ENCODE measurements at regions of chr10 and their contacts with region 1.

Region 1: GRCh38 chr10:22316285-22317120 is at the start of gene COMMD3:
- DNase-seq: peak; percentile 87 to 93 (median 91)
- H3K4me3 ChIP-seq: peak within 1 kb of the TSS; percentile 53
- H3K27ac ChIP-seq: peak within 1 kb of the TSS; percentile 87 to 89
- H3K4me1 ChIP-seq: no peaks in the 10 kb centered on the region
- H3K27me3 ChIP-seq: no peaks in the 10 kb centered on the region
- CTCF ChIP-seq: no peak
- EP300 ChIP-seq: no peak
- POLR2A ChIP-seq: peak; percentile 54
- total RNA-seq, gene COMMD3: 18.8 to 42.3 (median 31.4) TPM

Region 2: DNA sequence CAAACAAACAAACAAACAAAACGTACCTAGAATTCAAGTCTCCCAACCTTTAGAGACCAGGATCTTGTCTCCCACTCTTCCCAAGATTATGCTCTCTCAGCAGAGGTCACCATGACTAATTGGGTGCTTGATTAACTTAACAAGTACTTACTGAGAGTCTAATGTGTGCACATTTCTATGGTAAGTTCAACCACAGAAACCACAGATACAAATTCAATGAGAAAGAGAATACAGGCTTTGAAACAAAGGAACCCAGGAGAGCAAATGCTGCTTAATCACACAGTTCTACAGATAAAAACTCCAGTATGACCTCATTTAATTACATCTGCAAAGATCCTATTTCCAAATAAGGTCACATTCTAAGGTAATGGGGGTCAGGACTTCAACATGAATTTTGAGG is 455.8 kb before region 1 on chr10:
- intact Hi-C with region 1: no loop called
- DNase-seq: no peak
- H3K4me3 ChIP-seq: no peak overlapping the region
- H3K27ac ChIP-seq: no peak overlapping the region
- H3K4me1 ChIP-seq: no peaks in the 10 kb centered on the region
- H3K27me3 ChIP-seq: no peaks in the 10 kb centered on the region
- CTCF ChIP-seq: no peak
- EP300 ChIP-seq: no peak
- POLR2A ChIP-seq: no peak

Region 3: GRCh38 chr10:22228943-22229801 is 87.3 kb before region 1 on chr10:
- intact Hi-C with region 1: loop called in 2 of 4 experiments (anchors 2 to 5 kb)
- DNase-seq: peak; percentile 86 to 93 (median 92)
- H3K4me3 ChIP-seq: peak overlapping the region; percentile 58
- H3K27ac ChIP-seq: peak overlapping the region; percentile 86 to 97
- H3K4me1 ChIP-seq: no peaks in the 10 kb centered on the region
- H3K27me3 ChIP-seq: no peaks in the 10 kb centered on the region
- CTCF ChIP-seq: peak in 1 of 3 donors; percentile 3
- EP300 ChIP-seq: no peak
- POLR2A ChIP-seq: no peak

Region 4: DNA sequence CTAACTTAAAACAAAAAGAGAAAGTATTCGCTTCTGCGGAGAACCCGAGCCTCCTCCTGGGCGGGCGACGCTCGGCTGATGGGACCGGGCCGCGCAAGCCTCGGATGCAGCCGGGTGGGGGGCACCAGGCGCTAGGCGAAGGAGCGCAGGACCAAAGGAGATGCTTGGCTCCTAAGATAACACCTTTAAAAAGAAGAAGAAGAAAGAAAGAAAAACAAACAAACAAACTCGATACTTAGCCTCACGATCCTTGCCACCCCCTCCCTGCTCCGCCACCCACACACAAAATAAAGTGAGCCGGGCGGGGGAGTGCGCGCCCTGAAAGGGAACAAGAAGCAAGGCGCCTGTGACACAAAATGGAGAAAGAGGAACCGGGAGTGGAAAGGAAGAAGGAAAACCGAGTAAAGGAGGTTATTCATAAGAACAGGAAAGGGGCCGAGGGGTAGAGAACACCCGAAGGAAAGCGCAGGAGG is 64.7 kb before region 1 on chr10:
- intact Hi-C with region 1: loop called in 3 of 4 experiments (anchors 2 to 10 kb)
- DNase-seq: peak; percentile 59 to 77 (median 70)
- H3K4me3 ChIP-seq: peak overlapping the region; percentile 62
- H3K27ac ChIP-seq: peak overlapping the region; percentile 91 to 99
- H3K4me1 ChIP-seq: no peaks in the 10 kb centered on the region
- H3K27me3 ChIP-seq: no peaks in the 10 kb centered on the region
- CTCF ChIP-seq: no peak
- EP300 ChIP-seq: no peak
- POLR2A ChIP-seq: no peak

Region 5: DNA sequence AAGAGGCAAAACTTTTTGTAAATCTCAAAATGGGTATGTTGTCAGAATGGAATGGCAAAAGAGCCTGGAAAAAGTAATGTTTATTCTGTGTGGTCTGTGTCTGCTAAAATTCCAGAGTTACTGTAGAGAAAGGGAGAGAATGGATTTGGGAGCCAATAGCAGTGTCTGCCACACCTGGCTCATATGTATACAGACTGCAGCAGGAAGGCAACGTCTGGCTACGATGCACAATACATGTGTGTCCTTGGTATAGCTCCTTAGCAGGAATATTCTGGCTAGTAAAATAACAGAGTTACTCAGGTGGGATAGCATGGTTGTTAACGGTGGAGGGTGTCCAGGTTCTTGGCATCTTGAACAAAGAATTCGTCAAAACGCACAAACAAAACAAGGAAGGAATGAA is 38.8 kb before region 1 on chr10:
- intact Hi-C with region 1: loop called in 1 of 4 experiments (anchors 1 kb)
- DNase-seq: no peak
- H3K4me3 ChIP-seq: no peak overlapping the region
- H3K27ac ChIP-seq: no peak overlapping the region
- H3K4me1 ChIP-seq: no peaks in the 10 kb centered on the region
- H3K27me3 ChIP-seq: no peaks in the 10 kb centered on the region
- CTCF ChIP-seq: no peak
- EP300 ChIP-seq: no peak
- POLR2A ChIP-seq: no peak

Measured in ovary (tissue), 10 donors.